B cell (primary cell): ENCODE measurements at regions of chr16 and their contacts with region 1.

Region 1: DNA sequence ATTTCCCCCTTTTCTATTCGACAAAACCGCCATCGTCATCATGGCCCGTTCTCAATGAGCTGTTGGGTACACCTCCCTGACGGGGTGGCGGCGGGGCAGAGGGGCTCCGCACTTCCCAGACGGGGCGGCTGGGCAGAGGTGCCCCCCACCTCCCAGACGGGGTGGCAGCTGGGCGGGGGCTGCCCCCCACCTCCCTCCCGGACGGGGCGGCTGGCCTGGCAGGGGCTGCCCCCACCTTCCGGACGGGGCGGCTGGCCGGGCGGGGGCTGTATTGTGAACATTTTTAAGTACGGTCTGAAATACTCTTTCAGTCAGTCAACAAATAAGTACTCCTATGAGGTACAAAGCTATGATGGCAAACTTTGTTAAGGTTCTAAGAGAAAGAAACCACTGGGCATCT is 222.8 kb downstream of the CNTNAP4 start:
- DNase-seq: no peak
- ATAC-seq: no peak
- H3K4me3 ChIP-seq: no peak overlapping the region
- H3K4me3 Mint-ChIP-seq: no peak overlapping the region
- H3K27ac ChIP-seq: no peak overlapping the region
- H3K27ac Mint-ChIP-seq: no peak overlapping the region
- H3K4me1 ChIP-seq: no peaks in the 10 kb centered on the region
- H3K4me1 Mint-ChIP-seq: no peaks in the 10 kb centered on the region
- H3K27me3 ChIP-seq: no peaks in the 10 kb centered on the region
- H3K27me3 Mint-ChIP-seq: no peaks in the 10 kb centered on the region
- CTCF ChIP-seq: no peak

Region 2: GRCh38 chr16:76464955-76465638 is 34.9 kb before region 1 on chr16:
- CTCF ChIA-PET with region 1: no interaction called
- POLR2A ChIA-PET with region 1: no interaction called
- intact Hi-C with region 1: no loop called
- DNase-seq: no peak
- ATAC-seq: no peak
- H3K4me3 ChIP-seq: no peak overlapping the region
- H3K4me3 Mint-ChIP-seq: no peak overlapping the region
- H3K27ac ChIP-seq: no peak overlapping the region
- H3K27ac Mint-ChIP-seq: no peak overlapping the region
- H3K4me1 ChIP-seq: no peaks in the 10 kb centered on the region
- H3K4me1 Mint-ChIP-seq: no peaks in the 10 kb centered on the region
- H3K27me3 ChIP-seq: no peaks in the 10 kb centered on the region
- H3K27me3 Mint-ChIP-seq: no peaks in the 10 kb centered on the region
- CTCF ChIP-seq: no peak

Region 3: DNA sequence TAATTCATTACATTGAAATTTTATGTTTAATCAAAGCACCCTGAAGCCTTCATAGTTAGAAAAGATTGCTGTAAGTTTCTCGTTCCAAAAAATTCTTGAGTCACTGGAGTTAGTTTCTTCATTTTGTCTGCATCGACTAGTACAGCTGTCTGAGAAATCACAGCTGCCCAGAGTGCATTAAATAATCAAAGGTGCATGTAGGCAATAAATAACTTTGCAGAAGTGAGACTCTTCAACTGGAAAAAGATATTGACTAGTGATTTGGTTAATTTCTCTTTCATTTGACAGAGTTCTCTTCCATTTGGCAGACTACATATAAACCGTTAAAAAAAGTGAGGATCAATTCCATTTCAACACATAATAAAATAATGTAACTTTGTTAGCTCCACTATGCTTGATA is 11.2 kb after region 1 on chr16:
- CTCF ChIA-PET with region 1: no interaction called
- POLR2A ChIA-PET with region 1: no interaction called
- intact Hi-C with region 1: loop called (anchors 1 kb)
- DNase-seq: no peak
- ATAC-seq: no peak
- H3K4me3 ChIP-seq: no peak overlapping the region
- H3K4me3 Mint-ChIP-seq: no peak overlapping the region
- H3K27ac ChIP-seq: no peak overlapping the region
- H3K27ac Mint-ChIP-seq: no peak overlapping the region
- H3K4me1 ChIP-seq: no peaks in the 10 kb centered on the region
- H3K4me1 Mint-ChIP-seq: no peaks in the 10 kb centered on the region
- H3K27me3 ChIP-seq: no peaks in the 10 kb centered on the region
- H3K27me3 Mint-ChIP-seq: no peaks in the 10 kb centered on the region
- CTCF ChIP-seq: no peak